ENCODE measurements at regions of chr1 and their contacts with region 1.

Region 1: DNA sequence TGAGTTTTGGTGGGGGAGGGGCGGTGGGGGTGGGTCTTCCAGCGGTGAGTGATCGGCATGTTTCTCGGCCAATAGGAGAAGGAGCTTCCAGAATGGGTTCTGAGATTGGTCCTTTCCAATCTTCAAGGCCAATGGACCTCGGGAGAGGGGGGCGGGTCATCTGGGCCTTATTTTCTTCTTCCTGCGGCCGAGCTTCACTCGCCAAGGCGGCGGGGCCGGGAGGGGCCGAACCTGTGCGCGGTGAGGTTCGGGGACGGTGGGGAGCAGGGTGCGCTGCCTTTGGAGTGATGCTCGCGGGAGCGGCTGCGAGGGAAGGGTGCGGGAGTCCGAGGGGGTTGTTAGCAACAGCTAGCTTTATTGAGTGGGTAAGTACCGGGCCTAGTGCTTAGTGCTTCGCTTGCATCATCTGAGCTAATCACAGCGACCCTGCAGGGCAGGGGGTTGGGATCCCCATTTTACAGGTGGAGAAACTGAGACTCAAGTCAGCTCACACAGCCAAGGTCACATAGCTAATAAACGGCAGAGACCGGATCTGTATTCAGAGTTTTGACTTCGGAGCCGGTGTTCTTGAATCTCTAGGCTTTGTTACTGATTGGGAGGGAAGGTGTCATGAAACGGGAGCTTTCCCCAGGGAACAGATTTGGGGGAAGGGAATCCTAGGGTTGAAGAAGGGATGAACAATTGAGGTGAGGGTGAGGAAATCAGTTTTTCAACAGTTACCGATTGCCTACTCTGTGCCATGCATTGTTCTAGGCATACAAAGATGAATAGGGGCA is 549 bp downstream of the KDM4A start:
- DNase-seq: peak; percentile 95
- H3K4me3 ChIP-seq: peak overlapping the region; percentile 96
- H3K27ac ChIP-seq: peak overlapping the region; percentile 86
- H3K27me3 ChIP-seq: no peaks in the 10 kb centered on the region
- CTCF ChIP-seq: no peak

Region 2: DNA sequence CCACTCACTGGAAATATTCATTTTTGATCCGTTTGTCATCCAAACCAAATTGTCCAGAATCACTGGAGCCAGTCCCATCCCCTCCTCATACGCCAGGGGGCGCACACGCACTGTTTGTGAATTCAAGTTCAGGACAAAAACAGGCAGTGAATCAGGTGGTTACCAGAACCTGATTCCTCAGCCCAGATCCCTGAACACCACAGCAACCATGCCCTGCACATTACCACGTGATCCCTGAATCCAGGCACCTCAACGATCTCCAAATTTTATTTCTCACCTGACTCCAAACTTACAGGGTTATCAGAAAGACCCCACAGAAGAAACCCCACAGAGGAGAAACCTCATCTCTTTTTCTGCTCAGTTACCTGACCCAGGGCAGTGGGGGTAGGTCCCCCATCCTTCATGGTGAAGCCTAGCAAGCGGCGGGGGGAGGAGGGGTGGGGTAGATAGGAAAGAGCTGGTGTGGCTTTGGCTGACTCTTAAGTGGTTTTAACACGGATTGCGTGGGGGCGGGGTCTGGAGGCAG is 121.2 kb before region 1 on chr1:
- CTCF ChIA-PET with region 1: interaction called, 29 read pairs
- POLR2A ChIA-PET with region 1: interaction called, 7 read pairs
- DNase-seq: peak; percentile 75
- H3K4me3 ChIP-seq: no peak overlapping the region
- H3K27ac ChIP-seq: no peak overlapping the region
- H3K27me3 ChIP-seq: no peaks in the 10 kb centered on the region
- CTCF ChIP-seq: peak; percentile 97

Region 3: GRCh38 chr1:43634721-43635120 is 15.8 kb before region 1 on chr1:
- CTCF ChIA-PET with region 1: interaction called, 3 read pairs
- POLR2A ChIA-PET with region 1: interaction called, 13 read pairs
- DNase-seq: no peak
- H3K4me3 ChIP-seq: no peak overlapping the region
- H3K27ac ChIP-seq: no peak overlapping the region
- H3K27me3 ChIP-seq: no peaks in the 10 kb centered on the region
- CTCF ChIP-seq: no peak

Region 4: GRCh38 chr1:43671626-43672330 is 21.3 kb after region 1 on chr1:
- CTCF ChIA-PET with region 1: interaction called, 3 read pairs
- POLR2A ChIA-PET with region 1: interaction called, 13 read pairs
- DNase-seq: peak; percentile 48
- H3K4me3 ChIP-seq: no peak overlapping the region
- H3K27ac ChIP-seq: peak overlapping the region; percentile 57
- H3K27me3 ChIP-seq: no peaks in the 10 kb centered on the region
- CTCF ChIP-seq: no peak

Region 5: DNA sequence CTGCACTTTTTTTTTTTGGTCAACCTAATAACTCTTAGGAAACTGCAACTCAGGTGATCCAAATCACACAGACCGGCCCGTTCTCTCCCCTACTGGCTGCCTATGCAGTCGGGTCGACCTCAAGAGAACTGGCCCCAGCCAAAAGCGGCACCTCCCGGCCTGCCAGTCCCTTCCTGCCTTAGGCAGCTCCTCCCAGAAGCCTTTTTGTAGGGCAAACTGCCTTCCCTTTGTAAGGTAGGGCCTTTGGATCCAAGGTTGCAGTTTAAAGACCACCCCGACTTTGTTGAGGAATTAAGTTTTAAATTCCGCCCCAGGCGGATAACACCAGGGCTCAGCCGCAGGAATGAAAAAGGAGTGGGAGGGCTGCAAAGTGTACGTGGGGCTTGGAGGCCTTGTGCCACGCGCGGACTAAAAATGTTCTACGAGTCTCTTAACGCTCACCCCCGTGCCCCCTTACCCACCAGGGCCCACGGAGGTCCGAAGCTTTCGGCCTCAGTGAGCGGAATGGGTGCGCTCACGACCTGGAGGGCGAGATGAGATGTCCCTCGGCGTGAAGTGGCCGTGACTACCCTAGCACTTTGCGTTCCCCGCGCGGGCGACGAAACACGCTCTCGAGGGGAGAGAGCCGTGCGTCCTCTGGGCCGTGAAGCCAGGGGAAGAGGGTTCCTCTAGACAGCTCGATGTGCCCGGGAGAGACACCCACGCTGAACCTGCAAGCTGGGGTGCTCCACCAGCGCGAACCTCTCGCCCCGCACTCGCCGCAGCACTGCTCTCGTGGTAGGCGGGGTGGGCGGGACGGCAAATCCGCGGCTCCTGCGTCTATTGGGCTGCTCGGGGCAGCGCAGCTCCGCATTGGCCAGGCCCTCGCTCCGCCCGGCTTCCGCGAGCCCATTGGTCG is 56.3 kb after region 1 on chr1:
- CTCF ChIA-PET with region 1: no interaction called
- POLR2A ChIA-PET with region 1: interaction called, 11 read pairs
- DNase-seq: peak; percentile 73
- H3K4me3 ChIP-seq: peak overlapping the region; percentile 87
- H3K27ac ChIP-seq: peak overlapping the region; percentile 43
- H3K27me3 ChIP-seq: no peaks in the 10 kb centered on the region
- CTCF ChIP-seq: no peak

Measured in AG04450 (cell line).